Posterior cingulate gyrus (tissue), 11 donors: ENCODE measurements at regions of chr22 and their contacts with region 1.

Region 1: GRCh38 chr22:36856121-36856791 is 4.5 kb upstream of the NCF4 start:
- DNase-seq: peak; percentile 80 to 99 (median 94)

Region 2: DNA sequence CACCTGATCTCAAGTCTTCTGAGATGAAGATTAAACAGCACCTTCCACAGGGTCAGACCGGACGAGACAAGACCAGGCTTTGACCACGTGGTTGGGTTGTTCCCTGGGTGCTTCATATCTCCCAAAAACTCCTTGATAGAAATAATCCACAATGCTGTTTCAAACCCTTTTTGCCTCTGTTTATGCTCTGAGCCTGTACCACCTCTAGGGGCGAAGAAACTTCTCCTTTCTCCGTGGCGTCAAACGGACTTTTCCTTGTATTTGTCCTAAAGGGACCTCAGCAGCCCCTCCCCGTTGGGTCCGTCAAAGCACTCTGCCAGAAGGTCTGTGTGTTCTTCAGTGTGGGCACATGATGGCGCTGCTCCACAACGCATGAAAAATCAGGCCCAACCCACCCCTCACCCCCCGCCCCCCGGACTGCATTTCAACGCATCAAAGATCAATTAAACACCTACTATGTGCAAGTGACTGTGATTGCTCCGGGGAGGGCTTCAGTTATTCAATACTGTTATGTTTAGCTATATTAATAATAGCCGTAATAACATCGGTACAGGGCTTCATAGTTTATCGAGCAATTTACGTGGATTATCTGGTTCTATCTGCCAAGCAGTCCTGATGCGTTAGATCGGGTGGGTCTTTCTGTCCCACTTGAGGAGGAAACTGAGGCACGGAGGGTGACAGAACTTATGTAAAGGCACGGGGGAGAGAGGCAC is 310.0 kb before region 1 on chr22:
- intact Hi-C with region 1: loop called (anchors 1 kb)
- DNase-seq: peak in 9 of 10 donors; percentile 38 to 91 (median 55)

Region 3: DNA sequence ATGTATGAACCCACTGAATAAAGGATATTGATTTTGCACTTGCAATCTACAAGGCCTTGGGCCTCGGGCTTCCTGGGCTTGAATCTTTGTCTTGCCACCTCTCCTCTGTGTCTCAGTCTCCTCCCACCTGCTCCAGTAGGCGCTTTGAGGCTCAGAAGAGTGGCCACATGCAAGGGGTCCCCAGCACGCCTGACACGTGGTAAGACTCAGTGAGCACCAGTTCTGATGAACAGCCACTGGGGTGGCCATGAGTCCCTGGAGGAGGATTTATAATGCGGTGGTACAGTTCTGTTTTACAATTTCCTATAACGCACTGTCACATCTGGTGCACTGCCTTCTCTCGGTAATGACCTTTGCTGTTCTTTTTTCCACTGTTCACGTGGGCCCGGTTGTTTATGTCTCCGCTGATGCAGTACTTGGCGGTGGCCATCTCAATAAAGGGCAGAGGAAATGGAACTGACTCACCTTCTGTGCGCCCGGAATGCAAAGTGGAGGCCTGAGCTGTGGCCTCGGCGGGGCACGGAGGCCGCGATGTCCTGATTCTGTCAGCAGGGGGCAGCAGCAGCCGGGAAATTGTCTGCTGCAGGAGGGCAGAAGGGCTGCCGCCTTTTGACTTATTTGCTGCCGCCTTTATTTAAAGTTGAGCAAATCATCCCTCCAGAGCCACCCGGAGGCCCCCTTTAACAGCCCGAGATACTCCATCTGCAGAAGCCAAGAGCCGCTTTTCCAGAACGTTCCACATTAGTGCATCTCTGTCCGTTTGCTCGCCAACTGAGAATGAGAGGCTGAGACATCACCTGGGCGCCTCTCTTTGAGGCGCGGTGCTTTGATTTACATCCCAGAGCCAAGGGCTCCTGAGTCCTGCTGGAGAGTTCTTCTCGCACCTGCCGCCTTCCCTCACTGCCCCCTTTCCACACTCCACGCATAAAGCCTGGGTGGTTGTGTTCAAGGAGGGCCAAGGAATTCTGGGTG is 74.3 kb before region 1 on chr22:
- intact Hi-C with region 1: loop called (anchors 5 kb)
- DNase-seq: peak; percentile 62 to 97 (median 82)